ENCODE measurements at regions of chr11 and their contacts with region 1.

Region 1: GRCh38 chr11:72030472-72031045 is 31.9 kb downstream of the IL18BP start:
- H3K4me3 ChIP-seq: no peak overlapping the region
- H3K27ac ChIP-seq: no peak overlapping the region
- H3K4me1 ChIP-seq: no peaks in the 10 kb centered on the region
- CTCF ChIP-seq: no peak

Region 2: GRCh38 chr11:72079827-72080255 is 49.3 kb after region 1 on chr11:
- CTCF ChIA-PET with region 1: interaction called, 60 read pairs
- POLR2A ChIA-PET with region 1: interaction called, 3 read pairs
- H3K4me3 ChIP-seq: peak overlapping the region; percentile 77
- H3K27ac ChIP-seq: peak overlapping the region; percentile 57
- H3K4me1 ChIP-seq: no peaks in the 10 kb centered on the region
- CTCF ChIP-seq: no peak

Region 3: DNA sequence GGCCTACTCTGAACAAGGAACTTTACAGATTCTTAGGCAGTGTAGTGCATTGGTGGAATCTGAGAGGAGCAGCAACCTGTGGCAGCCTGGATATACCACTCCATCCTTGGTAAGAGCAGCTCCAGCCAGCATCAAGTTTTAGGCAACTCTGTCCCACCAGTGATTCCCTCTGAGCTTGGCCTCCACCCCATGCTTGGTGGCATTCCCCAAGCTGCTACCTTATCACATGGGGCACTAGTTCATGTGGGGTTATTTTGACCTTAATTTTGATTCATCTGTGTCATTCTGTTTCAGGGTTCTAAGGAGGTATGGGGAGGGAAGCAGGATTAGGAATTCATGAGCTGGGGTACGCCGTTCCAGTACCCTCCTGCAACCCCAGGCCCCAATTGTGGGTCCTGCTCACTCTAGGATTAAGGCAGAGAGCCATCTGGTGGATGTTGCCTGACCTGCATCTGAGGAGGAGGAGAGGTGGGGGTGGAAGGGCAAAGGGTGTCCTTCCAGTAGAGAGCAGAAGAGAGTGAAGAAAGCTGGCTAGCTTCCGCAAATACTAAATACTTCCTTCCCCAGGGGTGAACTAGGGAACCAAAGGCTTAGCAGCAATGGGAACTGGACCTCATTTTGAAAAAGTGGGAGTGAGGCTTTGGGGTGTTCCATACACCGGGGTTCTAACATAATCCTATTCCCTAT is 60.6 kb after region 1 on chr11:
- CTCF ChIA-PET with region 1: interaction called, 184 read pairs
- POLR2A ChIA-PET with region 1: interaction called, 9 read pairs
- H3K4me3 ChIP-seq: no peak overlapping the region
- H3K27ac ChIP-seq: no peak overlapping the region
- H3K4me1 ChIP-seq: no peaks in the 10 kb centered on the region
- CTCF ChIP-seq: peak; percentile 85

Region 4: DNA sequence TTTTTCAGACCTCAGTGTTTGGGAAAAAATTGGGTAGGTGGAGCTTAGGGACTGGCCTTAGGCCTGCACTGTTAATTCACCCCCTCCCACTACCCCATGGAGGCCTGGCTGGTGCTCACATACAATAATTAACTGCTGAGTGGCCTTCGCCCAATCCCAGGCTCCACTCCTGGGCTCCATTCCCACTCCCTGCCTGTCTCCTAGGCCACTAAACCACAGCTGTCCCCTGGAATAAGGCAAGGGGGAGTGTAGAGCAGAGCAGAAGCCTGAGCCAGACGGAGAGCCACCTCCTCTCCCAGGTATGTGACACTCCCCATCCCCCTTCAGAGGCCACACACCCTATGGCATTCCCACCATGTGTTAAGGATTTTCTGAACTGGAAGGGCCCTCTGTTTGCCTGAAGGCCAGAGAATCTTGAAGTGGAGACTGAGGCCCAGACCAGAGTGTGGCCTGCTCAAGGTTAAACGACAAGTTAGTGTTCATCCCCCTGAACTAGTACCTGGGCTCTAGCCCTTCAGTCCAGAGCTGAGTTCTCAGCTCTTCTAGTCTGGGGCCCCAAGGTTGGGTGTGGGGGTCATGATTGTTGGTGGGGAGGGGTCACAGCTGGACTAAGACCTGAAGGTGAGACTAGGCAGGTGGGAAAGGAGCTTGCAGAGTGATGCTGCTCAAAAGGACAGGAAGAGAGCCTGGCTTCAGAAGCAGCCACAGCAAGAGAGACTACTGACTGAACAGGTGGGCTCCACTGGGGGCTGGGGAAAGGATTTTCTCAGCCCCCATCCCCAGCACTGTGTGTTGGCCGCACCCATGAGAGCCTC is 159.1 kb after region 1 on chr11:
- CTCF ChIA-PET with region 1: interaction called, 48 read pairs
- POLR2A ChIA-PET with region 1: no interaction called
- H3K4me3 ChIP-seq: no peak overlapping the region
- H3K27ac ChIP-seq: no peak overlapping the region
- H3K4me1 ChIP-seq: no peaks in the 10 kb centered on the region
- CTCF ChIP-seq: no peak

Region 5: DNA sequence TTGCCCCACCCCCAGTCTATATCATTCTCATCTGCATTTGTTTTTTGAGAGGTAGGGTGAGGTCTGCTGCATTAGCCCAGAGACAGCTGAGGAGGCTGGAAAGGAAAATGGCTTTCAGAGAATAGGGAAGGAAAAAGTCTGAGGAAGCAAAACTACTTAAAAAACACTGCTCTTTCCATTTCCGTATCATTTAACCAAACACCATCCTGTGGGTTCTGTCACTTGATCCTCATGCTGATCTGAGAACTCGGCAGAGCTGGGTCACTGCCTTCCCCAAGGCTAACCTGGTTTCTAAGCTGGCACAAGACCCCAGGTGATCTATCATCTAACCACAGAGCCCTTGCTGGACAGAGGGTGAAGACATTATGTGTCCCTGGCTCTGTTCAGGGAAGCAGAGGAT is 187.3 kb after region 1 on chr11:
- CTCF ChIA-PET with region 1: no interaction called
- POLR2A ChIA-PET with region 1: no interaction called
- H3K4me3 ChIP-seq: no peak overlapping the region
- H3K27ac ChIP-seq: no peak overlapping the region
- H3K4me1 ChIP-seq: peaks cover 3% of the 10 kb centered on the region; the same call in 1 of the 2 replicates
- CTCF ChIP-seq: no peak

Measured in HEK293 (cell line).